ENCODE measurements at regions of chr6 and their contacts with region 1.

Region 1: DNA sequence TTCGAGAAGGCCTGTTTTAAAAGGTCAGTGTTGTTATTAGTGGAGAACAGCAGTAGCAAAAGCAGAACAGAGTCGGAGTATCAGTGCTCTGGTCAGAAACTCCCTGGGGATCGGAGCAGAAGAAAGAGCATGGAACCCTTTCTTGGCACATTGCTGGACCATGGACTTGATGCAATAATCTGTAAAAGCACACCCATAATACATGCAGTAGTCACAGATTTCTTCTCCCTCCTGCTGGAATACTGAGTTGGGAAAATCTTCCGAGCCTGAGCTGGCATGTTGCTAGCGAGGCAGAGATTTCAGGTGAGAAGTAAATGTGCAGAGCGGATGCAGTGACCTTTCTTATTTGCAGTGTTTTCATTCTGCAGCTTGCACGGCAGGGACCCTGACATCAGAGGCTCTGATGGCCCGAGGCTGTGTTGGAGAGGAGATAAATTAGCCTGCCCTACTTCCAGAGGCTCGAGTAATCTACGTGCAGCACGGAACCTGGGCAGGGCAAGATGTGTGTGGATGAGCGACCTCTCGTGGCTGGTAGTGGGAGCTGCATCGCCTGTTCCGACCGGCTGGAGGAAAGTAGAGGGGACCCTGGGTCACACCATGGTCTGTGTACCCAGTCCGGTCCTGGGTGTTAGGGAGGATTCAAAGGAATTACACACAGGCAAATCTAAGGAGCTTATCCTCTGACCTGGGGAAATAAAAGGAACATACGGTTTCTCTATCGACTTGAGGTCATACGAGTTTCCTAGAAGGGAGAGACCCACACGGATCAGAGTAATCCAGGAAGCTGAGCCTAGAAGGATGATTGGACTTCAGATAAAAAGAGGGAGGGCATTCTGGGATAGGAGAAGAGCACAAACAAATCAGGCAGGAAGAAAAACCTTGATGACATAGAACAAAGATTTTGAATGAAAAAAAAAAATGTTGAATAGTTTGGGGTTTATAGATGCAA is 137.0 kb upstream of the STMND1 start:
- DNase-seq: peak; percentile 39 to 59
- ATAC-seq: peak; percentile 94 to 99; a peak in 5 of 6 replicates
- H3K4me3 ChIP-seq: no peak overlapping the region
- H3K27ac ChIP-seq: no peak overlapping the region
- H3K4me1 ChIP-seq: no peaks in the 10 kb centered on the region
- CTCF ChIP-seq: peak; percentile 66
- EP300 ChIP-seq: no peak
- POLR2A ChIP-seq: no peak
- RAD21 ChIP-seq: peak; percentile 74 to 77

Region 2: GRCh38 chr6:16286148-16286522 is 678.7 kb before region 1 on chr6:
- CTCF ChIA-PET with region 1: interaction called, 10 read pairs
- POLR2A ChIA-PET with region 1: no interaction called
- DNase-seq: peak; percentile 39 to 55
- ATAC-seq: peak; percentile 90 to 93
- H3K4me3 ChIP-seq: no peak overlapping the region
- H3K27ac ChIP-seq: no peak overlapping the region
- H3K4me1 ChIP-seq: no peaks in the 10 kb centered on the region
- CTCF ChIP-seq: peak; percentile 68
- EP300 ChIP-seq: no peak
- POLR2A ChIP-seq: no peak
- RAD21 ChIP-seq: peak; percentile 61 to 65; a peak in 4 of 5 replicates

Region 3: DNA sequence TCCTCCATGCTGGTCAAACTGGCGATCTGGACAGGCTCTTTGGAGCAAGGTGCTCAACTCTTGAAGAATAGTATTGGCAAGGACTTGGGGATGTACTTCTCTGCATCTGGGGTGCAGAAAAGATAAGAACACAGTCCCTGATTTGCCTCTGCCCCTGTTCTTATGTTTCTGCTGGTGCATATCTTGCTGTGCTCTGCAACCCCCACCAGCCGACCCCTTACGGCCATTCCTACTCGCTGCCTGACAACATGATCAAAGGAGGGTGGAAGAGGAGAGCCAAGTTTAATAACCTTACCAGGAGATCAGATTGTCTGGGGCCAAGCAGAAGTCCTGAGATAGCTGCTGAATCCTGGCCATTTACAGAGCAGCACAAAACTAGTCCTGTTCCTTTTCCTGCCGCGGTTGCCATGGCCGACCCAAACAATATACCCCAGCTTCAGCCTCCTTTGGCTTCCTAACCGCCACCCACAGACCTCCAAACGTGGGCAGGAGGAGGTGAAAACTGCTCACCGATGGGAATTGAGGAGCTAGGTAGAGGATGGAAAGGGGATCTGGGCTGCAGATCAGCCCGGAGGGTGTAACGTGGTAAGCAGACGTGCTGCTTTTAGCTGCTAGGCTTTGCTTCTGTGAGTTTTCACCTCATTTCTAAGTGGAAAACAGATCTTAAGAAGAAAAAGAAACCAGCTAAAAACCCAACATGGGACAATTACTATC is 264.5 kb before region 1 on chr6:
- CTCF ChIA-PET with region 1: no interaction called
- POLR2A ChIA-PET with region 1: no interaction called
- DNase-seq: no peak
- ATAC-seq: no peak
- H3K4me3 ChIP-seq: no peak overlapping the region
- H3K27ac ChIP-seq: peak overlapping the region; percentile 57 to 76; a peak in 4 of 6 replicates
- H3K4me1 ChIP-seq: peaks cover 43% of the 10 kb centered on the region
- CTCF ChIP-seq: no peak
- EP300 ChIP-seq: no peak
- POLR2A ChIP-seq: no peak
- RAD21 ChIP-seq: no peak

Region 4: DNA sequence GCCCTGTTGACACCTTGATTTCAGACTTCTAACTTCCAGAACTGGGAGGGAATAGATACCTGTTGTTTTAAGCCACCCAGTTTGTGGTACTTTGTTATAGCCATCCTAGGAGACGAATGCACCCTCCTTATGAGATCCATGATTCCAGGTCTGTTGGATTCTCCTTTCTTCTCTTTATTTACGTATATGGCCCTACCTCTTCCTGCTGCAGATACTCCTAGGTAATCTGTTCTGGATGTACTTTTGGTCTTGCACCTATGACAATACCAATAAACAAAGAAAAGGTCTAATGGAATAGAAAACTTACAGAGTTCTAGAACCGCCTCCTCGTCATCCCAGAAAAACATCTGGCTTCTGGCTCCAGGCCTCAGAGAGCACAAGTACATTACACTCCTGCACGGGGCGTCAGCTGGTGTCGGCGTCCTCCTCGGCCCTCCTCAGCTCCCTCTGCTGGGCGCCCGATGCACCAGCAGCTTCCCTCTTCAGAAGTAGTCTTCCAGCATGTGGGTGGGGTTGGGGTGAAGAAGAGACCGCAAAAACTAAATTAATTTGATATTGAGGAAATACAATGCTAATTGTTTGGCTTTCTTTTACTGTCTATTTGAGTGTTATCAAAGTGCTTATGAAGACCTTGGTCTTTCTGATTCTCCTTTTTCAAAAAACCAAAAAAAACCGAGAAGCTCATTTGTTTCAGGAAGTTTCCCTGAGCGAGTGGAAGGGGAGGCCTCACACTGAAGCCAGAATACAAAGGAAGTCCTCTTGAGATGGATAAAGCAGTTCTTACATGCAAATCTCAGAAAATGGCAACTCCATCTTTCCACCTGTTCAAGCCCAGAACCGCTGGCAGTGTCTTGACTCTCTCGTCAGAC is 193.9 kb before region 1 on chr6:
- CTCF ChIA-PET with region 1: interaction called, 18 read pairs
- POLR2A ChIA-PET with region 1: no interaction called
- DNase-seq: peak; percentile 66 to 83
- ATAC-seq: peak; percentile 75 to 79
- H3K4me3 ChIP-seq: no peak overlapping the region
- H3K27ac ChIP-seq: peak overlapping the region; percentile 68 to 85
- H3K4me1 ChIP-seq: peaks cover 42% of the 10 kb centered on the region
- CTCF ChIP-seq: peak; percentile 57
- EP300 ChIP-seq: no peak
- POLR2A ChIP-seq: no peak
- RAD21 ChIP-seq: peak; percentile 54 to 67

Region 5: GRCh38 chr6:16947375-16948015 is 17.3 kb before region 1 on chr6:
- CTCF ChIA-PET with region 1: interaction called, 19 read pairs
- POLR2A ChIA-PET with region 1: no interaction called
- DNase-seq: peak in 1 of 2 experiments; percentile 58
- ATAC-seq: peak in 1 of 2 experiments; percentile 62; a peak in 2 of 6 replicates
- H3K4me3 ChIP-seq: no peak overlapping the region
- H3K27ac ChIP-seq: 0 out of 6 replicates have a peak overlapping the region, but pooled peaks of 1 of the 2 experiments have one; percentile 40
- H3K4me1 ChIP-seq: 0 out of 3 replicates have a peak, but pooled peaks cover 4% of the 10 kb centered on the region
- CTCF ChIP-seq: no peak
- EP300 ChIP-seq: no peak
- POLR2A ChIP-seq: no peak
- RAD21 ChIP-seq: no peak

Measured in A549 (cell line).